CD8-positive, alpha-beta T cell (primary cell): ENCODE measurements at regions of chr7 and their contacts with region 1.

Region 1: DNA sequence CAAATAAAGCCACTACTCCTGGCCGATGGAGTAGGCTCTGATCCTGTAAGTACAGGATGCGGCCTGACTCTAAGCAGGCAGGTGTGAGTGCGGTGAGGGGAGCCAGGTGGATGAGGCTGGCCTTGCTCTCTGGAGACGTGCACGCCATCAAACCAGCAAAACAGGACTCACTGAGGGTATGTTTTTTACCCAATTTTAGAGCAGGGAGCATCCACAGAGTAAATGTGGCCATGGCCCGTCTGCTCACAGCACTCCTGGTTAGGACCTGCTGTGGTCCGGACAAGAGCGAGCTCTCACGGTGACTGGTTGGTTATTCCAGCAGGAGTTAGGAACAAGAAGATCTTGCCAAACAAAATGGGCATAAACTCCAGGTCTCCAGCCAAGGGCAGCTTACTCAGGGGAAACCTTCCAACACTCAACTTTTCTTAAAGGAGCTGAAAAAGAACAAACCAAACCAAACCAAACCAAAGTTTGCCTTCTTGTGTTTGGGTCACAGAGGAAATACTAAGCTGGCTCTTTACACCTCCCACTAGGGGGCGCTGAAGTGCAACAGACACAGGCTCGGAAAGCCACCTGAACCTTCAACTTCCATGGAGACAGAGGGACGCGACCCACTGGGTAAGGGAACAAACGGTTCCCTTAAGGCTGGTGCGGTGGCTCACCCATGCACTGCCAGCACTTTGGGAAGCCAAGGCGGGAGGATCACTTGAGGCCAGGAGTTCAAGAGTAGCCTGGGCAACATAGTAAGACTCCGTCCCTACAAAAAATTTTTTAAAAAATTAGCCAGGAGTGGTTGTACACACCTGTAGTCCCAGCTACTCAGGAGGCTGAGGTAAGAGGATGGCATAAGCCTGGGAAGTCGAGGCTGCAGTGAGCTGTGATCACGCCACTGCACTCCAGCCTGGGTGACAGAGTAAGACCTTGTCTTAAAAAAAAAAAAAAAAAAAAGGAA is 122.4 kb downstream of the CLEC2L start:
- DNase-seq: peak; percentile 64 to 90 (median 84)
- ATAC-seq: peak; percentile 52
- H3K4me3 ChIP-seq: no peak overlapping the region
- H3K4me3 Mint-ChIP-seq: no peak overlapping the region
- H3K27ac ChIP-seq: no peak overlapping the region
- H3K27ac Mint-ChIP-seq: peak overlapping the region; percentile 79
- H3K4me1 ChIP-seq: peaks cover 55% of the 10 kb centered on the region
- H3K4me1 Mint-ChIP-seq: peaks cover 76% of the 10 kb centered on the region
- H3K27me3 ChIP-seq: no peaks in the 10 kb centered on the region
- H3K27me3 Mint-ChIP-seq: no peaks in the 10 kb centered on the region
- CTCF ChIP-seq: peak; percentile 82

Region 2: DNA sequence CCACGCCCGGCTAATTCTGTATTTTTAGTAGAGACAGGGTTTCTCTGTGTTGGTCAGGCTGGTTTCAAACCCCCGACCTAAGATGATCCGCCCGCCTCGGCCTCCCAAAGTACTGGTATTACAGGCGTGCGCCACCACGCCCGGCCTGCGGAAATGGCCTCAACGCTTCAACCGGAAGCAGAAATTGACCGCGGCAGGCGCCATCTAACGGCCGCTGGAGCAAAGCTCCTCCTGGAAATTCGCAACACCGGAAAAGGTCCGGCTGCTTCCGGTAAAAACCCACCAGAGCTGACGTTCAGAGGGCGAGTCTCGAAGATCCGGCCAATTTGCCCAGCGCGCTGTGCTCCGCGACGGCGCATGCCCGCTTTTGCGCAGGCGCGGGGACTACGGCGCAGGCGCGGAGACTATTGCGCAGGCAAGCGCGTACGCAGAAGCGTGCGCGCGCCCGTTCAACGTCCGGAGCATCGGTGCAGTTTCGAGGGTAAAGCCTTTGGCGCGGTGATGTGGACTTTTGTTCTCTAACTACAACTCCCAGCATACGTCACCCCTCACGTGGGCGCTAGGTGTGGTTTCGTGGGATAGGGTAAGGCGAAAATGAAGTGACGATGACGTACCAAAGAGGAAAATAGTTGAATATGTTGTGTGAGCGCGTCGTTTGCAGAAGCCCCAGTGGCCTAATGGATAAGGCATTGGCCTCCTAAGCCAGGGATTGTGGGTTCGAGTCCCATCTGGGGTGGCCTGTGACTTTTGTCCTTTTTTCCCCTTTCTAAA is 305.6 kb before region 1 on chr7:
- CTCF ChIA-PET with region 1: no interaction called
- POLR2A ChIA-PET with region 1: no interaction called
- intact Hi-C with region 1: no loop called
- DNase-seq: peak; percentile 95 to 100 (median 97)
- ATAC-seq: peak; percentile 80
- H3K4me3 ChIP-seq: peak overlapping the region; percentile 69 to 85
- H3K4me3 Mint-ChIP-seq: peak overlapping the region; percentile 98
- H3K27ac ChIP-seq: peak overlapping the region; percentile 94 to 98
- H3K27ac Mint-ChIP-seq: peak overlapping the region; percentile 100
- H3K4me1 ChIP-seq: peaks cover 13% of the 10 kb centered on the region
- H3K4me1 Mint-ChIP-seq: peaks cover 32% of the 10 kb centered on the region
- H3K27me3 ChIP-seq: no peaks in the 10 kb centered on the region
- H3K27me3 Mint-ChIP-seq: peaks cover 2% of the 10 kb centered on the region
- CTCF ChIP-seq: peak; percentile 36

Region 3: GRCh38 chr7:139626817-139627216 is 19.0 kb before region 1 on chr7:
- CTCF ChIA-PET with region 1: interaction called, 53 read pairs
- POLR2A ChIA-PET with region 1: interaction called, 3 read pairs
- intact Hi-C with region 1: no loop called
- DNase-seq: peak in 6 of 9 experiments; percentile 21 to 58 (median 33)
- ATAC-seq: peak; percentile 68
- H3K4me3 ChIP-seq: no peak overlapping the region
- H3K4me3 Mint-ChIP-seq: peak overlapping the region; percentile 27
- H3K27ac ChIP-seq: peak overlapping the region; percentile 38 to 66
- H3K27ac Mint-ChIP-seq: peak overlapping the region; percentile 94
- H3K4me1 ChIP-seq: peaks cover 63% of the 10 kb centered on the region
- H3K4me1 Mint-ChIP-seq: peaks cover 80% of the 10 kb centered on the region
- H3K27me3 ChIP-seq: no peaks in the 10 kb centered on the region
- H3K27me3 Mint-ChIP-seq: no peaks in the 10 kb centered on the region
- CTCF ChIP-seq: no peak

Region 4: GRCh38 chr7:139660317-139661042 is 14.6 kb after region 1 on chr7:
- CTCF ChIA-PET with region 1: interaction called, 36 read pairs
- POLR2A ChIA-PET with region 1: no interaction called
- intact Hi-C with region 1: no loop called
- DNase-seq: no peak
- ATAC-seq: no peak
- H3K4me3 ChIP-seq: no peak overlapping the region
- H3K4me3 Mint-ChIP-seq: no peak overlapping the region
- H3K27ac ChIP-seq: no peak overlapping the region
- H3K27ac Mint-ChIP-seq: no peak overlapping the region
- H3K4me1 ChIP-seq: no peaks in the 10 kb centered on the region
- H3K4me1 Mint-ChIP-seq: peaks cover 21% of the 10 kb centered on the region
- H3K27me3 ChIP-seq: no peaks in the 10 kb centered on the region
- H3K27me3 Mint-ChIP-seq: no peaks in the 10 kb centered on the region
- CTCF ChIP-seq: no peak

Region 5: GRCh38 chr7:139731802-139732470 is 86.1 kb after region 1 on chr7:
- CTCF ChIA-PET with region 1: no interaction called
- POLR2A ChIA-PET with region 1: no interaction called
- intact Hi-C with region 1: no loop called
- DNase-seq: peak in 1 of 9 experiments; percentile 28
- ATAC-seq: no peak
- H3K4me3 ChIP-seq: no peak overlapping the region
- H3K4me3 Mint-ChIP-seq: no peak overlapping the region
- H3K27ac ChIP-seq: no peak overlapping the region
- H3K27ac Mint-ChIP-seq: no peak overlapping the region
- H3K4me1 ChIP-seq: peaks cover 18% of the 10 kb centered on the region
- H3K4me1 Mint-ChIP-seq: peaks cover 58% of the 10 kb centered on the region
- H3K27me3 ChIP-seq: no peaks in the 10 kb centered on the region
- H3K27me3 Mint-ChIP-seq: no peaks in the 10 kb centered on the region
- CTCF ChIP-seq: no peak

Region 6: GRCh38 chr7:139823959-139824521 is 178.2 kb after region 1 on chr7:
- CTCF ChIA-PET with region 1: interaction called, 25 read pairs
- POLR2A ChIA-PET with region 1: no interaction called
- intact Hi-C with region 1: loop called (anchors 1 to 2 kb)
- DNase-seq: no peak
- ATAC-seq: no peak
- H3K4me3 ChIP-seq: no peak overlapping the region
- H3K4me3 Mint-ChIP-seq: no peak overlapping the region
- H3K27ac ChIP-seq: no peak overlapping the region
- H3K27ac Mint-ChIP-seq: no peak overlapping the region
- H3K4me1 ChIP-seq: no peaks in the 10 kb centered on the region
- H3K4me1 Mint-ChIP-seq: peaks cover 2% of the 10 kb centered on the region
- H3K27me3 ChIP-seq: no peaks in the 10 kb centered on the region
- H3K27me3 Mint-ChIP-seq: peaks cover 3% of the 10 kb centered on the region
- CTCF ChIP-seq: no peak

Region 7: DNA sequence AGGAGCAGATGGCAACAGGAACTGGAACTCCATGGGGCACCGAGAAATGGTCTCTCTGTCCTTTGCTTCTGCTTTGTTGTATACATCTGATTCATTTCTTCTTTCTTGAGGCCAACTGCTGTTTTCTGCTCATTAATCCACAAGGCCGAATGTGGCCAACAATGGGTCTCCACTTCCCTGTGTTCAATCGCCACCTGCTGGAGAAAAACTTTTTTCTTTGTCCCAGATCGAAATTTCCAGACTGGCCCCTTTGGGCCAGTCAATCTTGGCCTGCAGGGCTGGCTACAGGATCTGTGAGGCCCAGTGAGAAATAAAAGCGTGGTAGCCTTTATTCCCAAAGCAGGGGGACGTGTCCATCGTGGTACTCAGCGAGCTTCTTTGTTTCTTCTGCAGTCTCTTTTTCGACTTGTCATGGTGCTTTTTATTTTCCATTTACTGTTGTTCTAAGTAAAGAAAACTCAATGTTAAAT is 358.1 kb after region 1 on chr7:
- CTCF ChIA-PET with region 1: interaction called, 140 read pairs
- POLR2A ChIA-PET with region 1: no interaction called
- intact Hi-C with region 1: loop called (anchors 1 kb)
- DNase-seq: peak in 4 of 9 experiments; percentile 4 to 50 (median 31)
- ATAC-seq: no peak
- H3K4me3 ChIP-seq: no peak overlapping the region
- H3K4me3 Mint-ChIP-seq: no peak overlapping the region
- H3K27ac ChIP-seq: no peak overlapping the region
- H3K27ac Mint-ChIP-seq: no peak overlapping the region
- H3K4me1 ChIP-seq: no peaks in the 10 kb centered on the region
- H3K4me1 Mint-ChIP-seq: no peaks in the 10 kb centered on the region
- H3K27me3 ChIP-seq: no peaks in the 10 kb centered on the region
- H3K27me3 Mint-ChIP-seq: no peaks in the 10 kb centered on the region
- CTCF ChIP-seq: peak; percentile 49

Region 8: DNA sequence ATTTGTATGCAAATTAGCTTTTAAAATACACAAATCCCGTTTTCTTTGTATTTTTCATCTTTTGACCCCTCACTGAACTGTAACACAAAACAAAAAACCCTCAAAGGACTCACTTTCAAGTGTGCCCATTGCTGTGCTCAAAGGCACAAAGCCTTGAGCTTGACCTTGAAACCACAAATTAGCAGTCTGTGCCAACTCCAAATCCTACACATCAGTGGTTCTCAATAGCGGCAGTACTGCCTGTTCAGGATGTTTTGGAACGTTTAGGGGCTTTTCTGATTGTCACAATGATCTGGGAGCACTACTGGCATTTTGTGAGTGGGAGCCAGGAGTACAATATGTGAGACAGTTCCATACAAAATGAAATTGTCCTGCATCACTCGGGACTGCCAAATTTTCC is 475.5 kb after region 1 on chr7:
- CTCF ChIA-PET with region 1: no interaction called
- POLR2A ChIA-PET with region 1: no interaction called
- intact Hi-C with region 1: no loop called
- DNase-seq: no peak
- ATAC-seq: no peak
- H3K4me3 ChIP-seq: no peak overlapping the region
- H3K4me3 Mint-ChIP-seq: no peak overlapping the region
- H3K27ac ChIP-seq: no peak overlapping the region
- H3K27ac Mint-ChIP-seq: no peak overlapping the region
- H3K4me1 ChIP-seq: no peaks in the 10 kb centered on the region
- H3K4me1 Mint-ChIP-seq: no peaks in the 10 kb centered on the region
- H3K27me3 ChIP-seq: no peaks in the 10 kb centered on the region
- H3K27me3 Mint-ChIP-seq: no peaks in the 10 kb centered on the region
- CTCF ChIP-seq: no peak